GM10248 (cell line): ENCODE measurements at regions of chr5 and their contacts with region 1.

Region 1: GRCh38 chr5:160439205-160439600 is 17.5 kb downstream of the PTTG1 start:
- DNase-seq: peak; percentile 63
- CTCF ChIP-seq: peak; percentile 78

Region 2: GRCh38 chr5:160082614-160083500 is 356.3 kb before region 1 on chr5:
- CTCF ChIA-PET with region 1: no interaction called
- POLR2A ChIA-PET with region 1: no interaction called
- DNase-seq: no peak
- CTCF ChIP-seq: no peak

Region 3: DNA sequence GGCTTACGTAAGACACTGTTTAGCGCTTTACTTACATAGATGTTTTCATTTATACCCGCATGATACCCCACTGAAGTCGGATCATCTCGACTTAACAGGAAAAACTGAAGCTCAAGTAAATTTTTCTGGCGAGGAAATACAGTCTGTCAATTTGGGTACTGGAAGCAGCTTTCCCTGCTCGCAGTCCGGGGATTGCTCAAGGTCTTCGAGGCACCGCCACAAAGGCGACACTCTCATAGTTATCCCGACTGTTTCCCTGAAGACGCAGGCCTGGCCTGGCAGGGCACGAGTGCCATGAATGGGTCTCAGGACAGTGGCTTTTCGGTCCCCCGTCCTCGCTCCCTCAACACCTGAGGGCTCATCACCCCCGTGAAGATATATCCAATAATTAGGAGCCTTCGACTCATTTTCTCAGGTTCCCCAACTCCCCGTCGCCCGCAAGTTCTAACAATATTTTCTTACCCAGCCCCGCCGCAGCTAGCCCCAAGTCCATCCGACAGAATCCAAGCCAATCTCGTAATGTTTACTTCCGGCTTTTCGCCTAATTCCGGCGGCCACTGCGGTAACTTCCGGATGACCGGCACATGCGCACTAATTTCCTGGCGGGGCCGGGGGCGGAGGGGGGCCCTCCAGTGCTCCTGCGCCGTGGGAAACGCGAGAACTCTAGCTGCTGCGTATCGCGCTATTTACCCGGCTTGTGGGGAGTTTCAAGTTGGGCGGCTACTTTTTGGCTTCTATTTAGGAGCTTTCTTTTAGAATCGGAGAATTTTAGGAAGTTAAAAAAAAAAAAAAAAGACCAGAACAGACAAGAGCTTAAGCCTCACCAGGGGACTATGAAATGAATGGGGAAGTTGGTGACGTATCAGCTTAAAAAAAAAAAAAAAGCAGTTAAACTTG is 20.4 kb before region 1 on chr5 and contains the start of gene SLU7:
- CTCF ChIA-PET with region 1: interaction called, 232 read pairs
- POLR2A ChIA-PET with region 1: interaction called, 8 read pairs
- DNase-seq: peak; percentile 93
- CTCF ChIP-seq: no peak

Region 4: DNA sequence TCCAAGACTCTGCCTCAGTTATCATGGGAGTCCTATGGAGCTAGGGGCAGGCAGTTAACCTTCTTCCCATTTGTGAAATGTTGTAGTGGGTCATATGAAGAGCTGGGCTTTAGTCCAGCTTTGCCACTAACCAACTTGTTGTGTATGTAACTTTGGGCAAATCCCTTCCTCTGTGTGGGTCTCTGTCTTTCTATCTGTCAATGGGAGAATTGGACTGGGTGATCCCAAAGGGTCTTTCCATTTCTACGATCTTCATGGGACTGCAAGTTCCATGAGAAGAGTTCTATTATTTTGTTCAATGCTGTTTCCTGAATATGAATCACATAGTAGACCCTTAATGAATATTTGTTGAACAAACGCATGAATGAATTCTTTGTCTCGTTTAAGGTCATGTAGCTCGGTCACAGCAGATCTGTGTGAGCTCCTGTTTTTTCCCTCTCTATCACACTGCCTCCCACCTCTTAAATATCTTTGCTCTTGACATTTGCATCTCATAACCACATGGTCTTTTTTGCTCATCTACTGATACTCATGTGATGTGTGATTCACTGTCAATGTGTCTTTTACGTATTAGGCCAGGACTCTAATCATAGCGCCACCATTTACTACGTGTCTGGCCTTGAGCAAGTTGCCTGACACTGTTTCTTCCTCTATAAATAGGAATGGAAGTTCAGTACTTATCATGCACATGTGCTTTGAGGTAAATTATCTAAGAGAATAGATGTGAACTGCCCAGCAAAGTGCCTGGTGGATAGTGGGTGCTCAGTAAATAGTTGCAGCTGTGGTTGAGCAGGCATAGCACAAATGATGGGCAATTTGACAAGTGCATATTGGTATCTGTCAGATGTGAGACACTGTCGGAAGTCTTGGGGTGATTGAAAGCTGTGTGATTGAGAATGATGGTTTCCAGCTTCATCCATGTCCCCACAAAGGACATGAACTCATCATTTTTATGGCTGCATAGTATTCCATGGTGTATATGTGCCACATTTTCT is 19.9 kb after region 1 on chr5:
- CTCF ChIA-PET with region 1: interaction called, 230 read pairs
- POLR2A ChIA-PET with region 1: interaction called, 16 read pairs
- DNase-seq: peak; percentile 42
- CTCF ChIP-seq: no peak

Region 5: DNA sequence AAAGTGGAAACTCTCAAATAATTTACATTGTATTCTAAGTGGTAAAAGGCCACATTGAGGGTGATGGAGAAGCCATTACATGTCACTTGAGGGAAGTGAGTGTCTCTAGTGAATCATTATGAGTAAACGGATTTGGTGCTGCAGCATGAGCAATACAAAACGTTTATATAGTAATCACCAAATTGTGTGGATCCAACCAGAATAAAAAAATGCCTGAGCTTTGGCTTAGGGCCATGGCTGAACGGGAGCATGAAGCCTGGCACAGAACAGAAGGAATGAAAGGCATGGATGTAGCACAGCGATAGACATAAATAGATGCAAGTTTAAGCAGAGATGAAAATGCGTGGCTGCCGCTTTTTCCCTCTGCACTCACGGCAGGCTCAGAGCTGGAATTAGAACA is 40.7 kb after region 1 on chr5:
- CTCF ChIA-PET with region 1: interaction called, 147 read pairs
- POLR2A ChIA-PET with region 1: no interaction called
- DNase-seq: no peak
- CTCF ChIP-seq: no peak

Region 6: GRCh38 chr5:160493806-160494338 is 54.7 kb after region 1 on chr5:
- CTCF ChIA-PET with region 1: interaction called, 31 read pairs
- POLR2A ChIA-PET with region 1: no interaction called
- DNase-seq: no peak
- CTCF ChIP-seq: no peak

Region 7: DNA sequence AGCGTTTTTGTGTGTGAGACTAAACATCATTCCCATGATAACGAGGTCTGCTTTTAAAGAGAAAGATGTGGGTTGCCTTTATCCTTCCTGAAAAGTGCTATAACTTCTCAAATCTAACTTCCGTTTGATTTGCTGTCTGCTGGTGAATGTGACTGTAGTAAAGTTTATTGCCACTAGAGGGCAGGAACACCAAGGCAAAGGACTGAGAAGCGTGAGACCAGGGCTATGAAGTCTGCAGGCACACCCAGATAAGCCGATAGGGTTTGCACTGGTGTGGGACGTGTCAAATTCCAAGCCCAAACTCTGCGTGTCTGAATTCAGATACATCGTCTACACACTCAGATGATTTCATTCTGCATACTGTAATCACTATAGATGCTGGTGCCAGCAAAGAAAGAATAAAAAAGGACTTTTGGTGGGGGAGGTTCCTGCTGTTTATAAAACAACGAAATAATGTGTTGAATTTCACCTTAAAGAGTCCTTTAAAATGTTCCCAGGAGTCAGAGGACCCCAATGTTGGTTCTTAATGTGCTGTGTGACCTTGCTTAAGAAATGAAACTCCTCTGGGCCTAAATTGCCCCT is 69.7 kb after region 1 on chr5:
- CTCF ChIA-PET with region 1: interaction called, 48 read pairs
- POLR2A ChIA-PET with region 1: no interaction called
- DNase-seq: peak; percentile 77
- CTCF ChIP-seq: peak; percentile 89